ENCODE measurements at regions of chr3 and their contacts with region 1.

Region 1: DNA sequence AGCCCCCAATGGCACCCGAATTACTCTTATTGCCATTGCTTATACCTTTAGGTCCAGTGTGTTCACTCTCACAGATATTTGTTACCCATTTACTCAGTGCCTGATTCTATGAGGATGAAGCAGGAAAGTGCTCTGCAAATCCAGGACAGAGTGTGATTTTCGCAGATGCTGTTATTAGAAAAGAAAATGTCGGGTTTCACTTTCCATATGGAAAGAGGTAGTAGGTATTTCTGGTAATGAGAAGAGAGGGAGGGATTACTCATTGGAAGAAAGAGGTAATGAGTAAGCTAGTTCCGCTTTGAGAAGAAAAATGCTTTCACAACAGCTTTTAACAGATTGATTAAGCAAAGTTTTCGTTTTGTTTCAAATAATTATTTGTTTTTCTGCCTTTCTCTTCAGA is 336.3 kb upstream of the CFAP20DC start:
- DNase-seq: no peak
- H3K4me3 Mint-ChIP-seq: peak overlapping the region; percentile 32
- H3K27ac Mint-ChIP-seq: peak overlapping the region; percentile 97
- H3K4me1 Mint-ChIP-seq: peaks cover 91% of the 10 kb centered on the region
- H3K27me3 Mint-ChIP-seq: no peaks in the 10 kb centered on the region

Region 2: GRCh38 chr3:59212128-59212779 is 173.9 kb before region 1 on chr3:
- intact Hi-C with region 1: loop called (anchors 1 kb)
- DNase-seq: no peak
- H3K4me3 Mint-ChIP-seq: no peak overlapping the region
- H3K27ac Mint-ChIP-seq: no peak overlapping the region
- H3K4me1 Mint-ChIP-seq: peaks cover 11% of the 10 kb centered on the region
- H3K27me3 Mint-ChIP-seq: peaks cover 14% of the 10 kb centered on the region

Region 3: DNA sequence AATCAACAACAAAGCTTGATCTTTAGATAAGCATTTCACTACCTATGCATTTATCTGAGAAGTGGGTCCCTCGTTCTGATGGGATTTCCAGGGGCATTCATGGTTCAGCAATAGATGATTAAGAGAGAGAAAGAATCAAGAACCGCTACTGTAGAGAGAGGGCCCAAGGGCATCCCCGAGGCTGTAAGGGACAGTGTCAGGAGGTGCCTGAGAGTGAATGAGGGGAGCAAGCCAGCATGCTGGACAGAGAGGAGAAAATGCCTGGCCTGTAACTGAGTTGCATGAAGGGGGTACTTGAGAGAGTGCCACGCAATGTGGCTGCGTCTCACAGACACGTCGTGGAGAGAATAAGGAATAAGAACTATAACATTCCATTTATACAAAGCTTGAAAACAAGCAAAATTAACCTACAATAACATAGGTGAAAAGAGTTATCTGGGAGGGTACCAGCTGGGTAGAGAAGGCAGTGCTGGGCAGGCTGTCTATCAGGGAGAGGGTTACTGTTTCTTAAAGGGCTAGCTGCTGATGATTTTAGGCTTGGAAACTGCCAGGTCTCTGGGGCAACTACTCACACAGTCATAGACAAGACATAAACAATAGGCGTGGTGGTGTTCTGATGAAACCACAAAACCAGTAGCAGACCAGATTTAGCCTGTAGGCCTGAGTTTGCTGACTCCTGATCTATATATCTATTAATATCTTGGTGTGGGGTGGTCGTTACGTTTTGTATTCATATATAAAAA is 38.3 kb after region 1 on chr3:
- intact Hi-C with region 1: loop called (anchors 1 kb)
- DNase-seq: no peak
- H3K4me3 Mint-ChIP-seq: no peak overlapping the region
- H3K27ac Mint-ChIP-seq: peak overlapping the region; percentile 3
- H3K4me1 Mint-ChIP-seq: peaks cover 52% of the 10 kb centered on the region
- H3K27me3 Mint-ChIP-seq: no peaks in the 10 kb centered on the region

Region 4: DNA sequence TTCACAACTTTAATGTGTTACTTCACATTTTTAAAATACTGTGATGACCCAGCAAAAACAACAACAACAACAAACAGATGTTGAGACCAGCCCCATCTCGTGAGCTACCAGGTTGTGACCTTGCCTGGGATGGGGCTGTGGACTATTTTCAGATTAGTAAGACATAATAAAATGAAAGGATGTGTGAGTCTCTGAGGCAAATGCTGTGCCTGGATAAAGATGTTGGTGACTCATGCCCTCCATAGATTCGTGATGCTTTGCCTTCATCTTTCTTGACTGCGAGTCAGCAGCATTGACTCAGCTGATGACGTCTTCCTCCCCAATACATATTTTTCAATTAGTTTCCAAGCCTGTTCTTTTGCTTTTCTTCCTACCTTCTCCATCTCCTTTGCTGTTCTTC is 116.6 kb after region 1 on chr3:
- intact Hi-C with region 1: loop called (anchors 1 kb)
- DNase-seq: no peak
- H3K4me3 Mint-ChIP-seq: no peak overlapping the region
- H3K27ac Mint-ChIP-seq: peak overlapping the region; percentile 21
- H3K4me1 Mint-ChIP-seq: peaks cover 16% of the 10 kb centered on the region
- H3K27me3 Mint-ChIP-seq: no peaks in the 10 kb centered on the region

Region 5: DNA sequence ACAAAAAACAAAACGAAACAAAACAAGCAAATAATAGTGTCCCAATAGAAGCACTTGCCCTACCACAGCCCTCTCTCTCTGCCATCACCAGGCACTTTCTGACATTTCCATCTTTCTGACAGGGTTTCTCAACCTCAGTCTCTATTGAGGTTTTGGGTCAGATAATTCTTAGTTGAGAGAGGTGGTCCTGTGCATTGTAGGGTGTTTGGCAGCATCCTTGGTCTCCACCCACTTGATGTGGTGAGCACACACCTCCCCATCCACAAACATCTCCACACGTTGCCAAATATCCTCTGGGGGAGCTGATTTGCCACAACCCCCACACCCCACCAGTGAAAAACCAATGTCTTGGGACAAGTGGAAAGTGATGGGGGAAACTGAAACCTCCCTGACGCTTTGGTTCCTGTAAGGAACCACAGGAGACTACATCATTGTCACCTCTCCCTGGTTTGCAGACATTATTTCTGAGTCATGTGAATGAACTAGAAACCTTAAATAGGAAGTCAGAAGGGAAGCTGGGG is 397.4 kb after region 1 on chr3:
- intact Hi-C with region 1: loop called (anchors 1 kb)
- DNase-seq: peak; percentile 31
- H3K4me3 Mint-ChIP-seq: peak overlapping the region; percentile 40
- H3K27ac Mint-ChIP-seq: peak overlapping the region; percentile 91
- H3K4me1 Mint-ChIP-seq: peaks cover 41% of the 10 kb centered on the region
- H3K27me3 Mint-ChIP-seq: no peaks in the 10 kb centered on the region

Region 6: DNA sequence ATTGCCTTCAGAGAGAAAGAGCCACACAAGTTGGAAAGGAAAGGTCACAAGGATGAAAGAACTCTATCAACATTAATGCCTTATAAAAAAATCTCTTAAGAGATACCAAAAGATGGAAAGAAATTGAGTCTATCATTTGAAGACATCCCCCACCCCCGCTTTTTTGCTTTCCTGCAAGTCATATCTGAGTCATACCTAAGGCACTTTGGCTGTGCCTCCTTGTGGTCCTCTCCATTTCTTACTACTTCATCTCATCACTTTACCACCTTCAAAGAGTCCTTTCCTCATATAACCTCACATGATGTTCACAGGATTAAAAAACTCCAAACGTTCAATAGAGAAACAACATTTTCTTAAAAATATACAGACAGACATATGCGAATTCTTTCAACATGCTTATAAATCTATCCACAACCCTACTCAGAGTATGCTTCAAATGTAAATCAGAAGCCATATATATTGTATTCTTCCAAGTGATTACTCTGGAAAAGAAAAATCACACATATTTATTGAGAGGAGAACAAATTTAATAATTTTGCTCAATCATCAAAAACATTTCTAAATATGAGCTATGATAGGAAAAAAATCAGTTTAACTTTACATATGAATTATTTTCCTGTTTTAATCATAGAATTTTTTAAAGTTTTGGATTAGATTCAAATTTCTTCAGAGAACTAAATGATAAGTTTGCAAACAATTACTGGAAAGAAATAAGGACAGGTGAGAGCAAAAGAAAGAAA is 667.5 kb after region 1 on chr3:
- intact Hi-C with region 1: loop called (anchors 5 kb)
- DNase-seq: no peak
- H3K4me3 Mint-ChIP-seq: peak overlapping the region; percentile 21
- H3K27ac Mint-ChIP-seq: peak overlapping the region; percentile 75
- H3K4me1 Mint-ChIP-seq: peaks cover 86% of the 10 kb centered on the region
- H3K27me3 Mint-ChIP-seq: no peaks in the 10 kb centered on the region